ENCODE measurements at regions of chr6 and their contacts with region 1.

Region 1: GRCh38 chr6:32984605-32985389 is 16.4 kb downstream of the BRD2 start:
- DNase-seq: peak; percentile 96

Region 2: DNA sequence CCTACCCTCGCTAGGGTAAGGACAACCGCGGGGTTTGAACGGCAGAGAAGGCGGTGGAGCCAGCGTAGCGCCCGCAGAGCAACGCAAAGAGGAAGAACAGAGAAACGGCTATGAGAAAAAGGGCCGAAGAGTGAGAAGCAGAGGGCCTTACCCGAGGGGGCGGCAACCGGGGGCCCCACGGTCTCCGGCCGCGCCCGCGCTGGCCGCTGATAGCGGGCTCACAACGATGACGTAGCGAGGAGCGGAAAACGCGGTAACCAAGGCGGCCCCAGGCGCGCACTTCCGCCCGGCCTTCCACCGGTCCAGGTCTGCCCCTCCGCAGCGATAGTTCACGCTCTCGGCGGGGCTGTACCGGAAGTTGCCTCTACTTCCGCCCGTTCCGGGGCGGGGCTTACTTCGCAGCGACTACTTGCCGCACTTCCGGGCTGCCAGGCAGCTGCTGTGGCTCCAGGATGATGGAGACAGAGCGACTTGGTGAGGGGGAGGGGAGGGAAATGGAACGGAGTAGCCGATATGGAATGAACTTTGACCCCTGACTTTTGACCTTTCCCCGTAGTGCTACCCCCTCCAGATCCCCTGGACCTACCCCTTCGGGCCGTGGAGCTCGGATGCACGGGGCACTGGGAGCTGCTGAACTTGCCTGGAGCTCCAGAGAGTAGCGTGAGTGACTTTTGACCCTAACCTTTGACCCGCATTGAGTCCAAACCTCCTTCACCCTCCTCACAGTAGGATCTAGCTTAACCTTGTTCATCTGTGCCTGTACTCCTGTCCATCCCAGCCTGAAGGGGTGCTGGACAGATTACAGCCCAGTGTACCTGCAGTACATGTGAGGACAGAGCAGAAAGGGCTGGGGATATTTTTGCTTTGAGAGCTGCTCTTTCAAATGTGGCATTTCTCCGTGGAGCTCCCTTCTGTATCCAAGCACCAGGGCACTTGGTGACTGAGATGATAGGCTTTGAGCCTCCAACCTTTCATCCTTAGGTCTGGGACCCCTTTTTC is 1025.8 kb before region 1 on chr6 and contains the starts of genes NELFE and SKIC2:
- intact Hi-C with region 1: no loop called
- DNase-seq: peak; percentile 100
- total RNA-seq, gene NELFE: 41.6 to 52.0 TPM
- total RNA-seq, gene SKIC2: 41.6 to 42.9 TPM

Region 3: DNA sequence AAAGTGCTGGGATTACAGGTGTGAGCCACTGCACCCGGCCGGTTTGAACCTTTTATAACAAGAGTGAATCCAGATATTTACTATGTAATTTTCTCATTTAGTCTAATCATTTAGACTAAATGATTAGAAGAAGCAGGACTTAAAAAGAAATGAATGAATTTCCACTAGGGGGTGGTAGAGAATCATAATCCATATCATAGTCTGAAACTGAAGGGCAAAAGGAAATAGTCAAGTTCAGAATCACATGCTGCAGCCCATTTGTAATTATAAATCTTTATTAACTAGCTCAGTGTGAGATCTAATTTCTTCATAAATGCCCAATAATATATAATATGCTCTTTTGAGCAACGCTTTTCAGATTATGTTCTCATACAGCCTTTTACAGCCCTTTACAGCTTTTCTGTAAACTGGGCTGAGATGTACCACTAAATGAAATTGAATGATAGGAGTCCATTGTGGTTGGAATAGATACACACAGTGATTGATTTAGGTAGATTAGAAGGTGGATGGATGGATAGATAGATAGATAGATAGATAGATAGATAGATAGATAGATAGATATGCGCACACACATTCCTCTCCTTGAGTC is 99.0 kb before region 1 on chr6:
- intact Hi-C with region 1: loop called (anchors 5 to 10 kb)
- DNase-seq: no peak

Region 4: DNA sequence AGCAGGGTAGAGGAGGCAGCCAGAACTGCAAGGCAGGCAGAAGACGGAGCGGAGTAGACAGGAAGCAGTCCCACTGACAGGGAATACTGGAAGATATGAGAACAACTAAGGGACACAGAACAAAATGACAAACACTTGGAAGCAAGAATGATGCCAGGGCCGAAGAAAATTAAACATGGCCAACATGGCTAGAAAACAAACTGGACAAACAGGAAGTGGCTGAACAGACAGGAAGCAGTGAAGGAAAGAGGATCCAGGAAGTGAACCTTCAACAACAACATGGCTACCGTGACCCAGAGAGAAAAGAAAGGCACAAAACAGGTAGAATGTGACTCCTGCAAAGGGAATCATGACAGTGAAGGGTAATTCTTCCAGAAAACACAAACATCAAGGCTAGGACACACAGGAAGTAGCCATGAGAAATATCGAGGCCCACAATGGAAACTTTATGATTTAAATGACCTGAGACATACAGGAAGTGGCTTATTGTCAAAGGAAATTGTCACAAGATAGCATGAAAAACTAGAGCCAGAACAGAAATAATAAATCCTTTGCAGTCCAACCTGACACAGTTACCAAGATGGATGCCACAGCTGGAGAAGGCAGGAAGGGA is 198.4 kb after region 1 on chr6:
- intact Hi-C with region 1: no loop called
- DNase-seq: no peak

Region 5: GRCh38 chr6:34213772-34214171 is 1229.0 kb after region 1 on chr6:
- intact Hi-C with region 1: no loop called
- DNase-seq: no peak

Measured in posterior vena cava (tissue), 2 donors.